ENCODE measurements at regions of chr7 and their contacts with region 1.

Region 1: DNA sequence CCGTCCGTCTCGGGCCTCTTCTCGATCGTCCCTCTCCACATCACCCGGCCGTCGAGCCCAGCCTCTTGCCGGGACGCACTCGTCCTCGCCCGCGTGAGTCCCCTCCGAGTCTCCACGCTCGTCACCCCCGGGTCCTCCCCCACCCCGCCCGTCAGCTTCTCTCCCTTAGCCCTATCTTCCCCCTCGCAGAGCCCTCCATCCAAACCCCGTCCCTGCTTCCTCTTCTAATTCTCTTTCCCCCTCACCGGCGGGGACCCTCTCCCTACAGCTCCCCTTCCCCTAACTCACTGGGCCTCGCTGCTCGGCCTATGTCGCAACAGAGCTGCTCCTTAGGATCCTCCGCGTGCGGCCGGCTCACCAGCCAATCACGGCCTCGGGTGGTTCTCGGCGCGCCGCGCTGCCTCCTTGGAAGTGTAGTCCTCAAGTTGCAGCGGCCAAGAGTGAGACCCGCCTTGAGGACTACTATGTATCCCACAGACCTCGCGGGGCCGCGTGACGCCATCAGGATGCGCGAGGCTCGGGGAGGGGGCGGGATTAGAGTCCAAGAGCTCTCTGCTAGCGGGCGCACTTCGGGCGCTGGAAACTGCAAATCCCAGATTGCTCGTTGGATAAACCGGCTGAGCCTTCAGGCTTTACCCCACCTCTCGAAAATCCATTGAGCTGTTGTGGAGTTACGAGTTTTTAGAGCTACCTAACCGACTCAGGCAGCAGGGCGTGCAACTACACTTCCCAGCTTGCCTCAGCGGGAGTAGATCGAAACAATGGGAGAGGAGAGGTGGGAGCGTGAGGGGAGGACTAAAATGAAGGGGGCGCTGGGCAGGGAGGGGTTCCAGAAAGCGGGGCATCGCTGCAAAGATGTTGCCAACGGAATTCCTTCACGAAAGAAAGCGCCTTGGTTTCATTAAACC is at the start of gene ABCF2:
- DNase-seq: peak; percentile 97
- H3K4me3 Mint-ChIP-seq: peak within 1 kb of the TSS; percentile 98
- H3K27ac Mint-ChIP-seq: peak within 1 kb of the TSS; percentile 94
- H3K4me1 Mint-ChIP-seq: peaks cover 43% of the 10 kb centered on the region
- H3K27me3 Mint-ChIP-seq: peaks cover 2% of the 10 kb centered on the region
- total RNA-seq, gene ABCF2: 81.7 and 85.4 TPM in 2 replicates

Region 2: GRCh38 chr7:151028131-151028947 is 198.8 kb before region 1 on chr7 and contains the start of gene ABCB8:
- intact Hi-C with region 1: loop called (anchors 1 kb)
- DNase-seq: peak; percentile 98
- H3K4me3 Mint-ChIP-seq: peak within 1 kb of the TSS; percentile 94
- H3K27ac Mint-ChIP-seq: peak within 1 kb of the TSS; percentile 95
- H3K4me1 Mint-ChIP-seq: peaks cover 21% of the 10 kb centered on the region
- H3K27me3 Mint-ChIP-seq: peaks cover 2% of the 10 kb centered on the region
- total RNA-seq, gene ABCB8: 56.9 and 57.9 TPM in 2 replicates

Region 3: GRCh38 chr7:151087245-151088018 is 139.7 kb before region 1 on chr7:
- intact Hi-C with region 1: loop called (anchors 1 kb)
- DNase-seq: no peak
- H3K4me3 Mint-ChIP-seq: peak overlapping the region; percentile 88
- H3K27ac Mint-ChIP-seq: peak overlapping the region; percentile 84
- H3K4me1 Mint-ChIP-seq: peaks cover 41% of the 10 kb centered on the region
- H3K27me3 Mint-ChIP-seq: peaks cover 20% of the 10 kb centered on the region

Region 4: GRCh38 chr7:151244196-151244840 is 17.2 kb after region 1 on chr7:
- intact Hi-C with region 1: loop called (anchors 1 kb)
- DNase-seq: peak; percentile 49
- H3K4me3 Mint-ChIP-seq: peak overlapping the region; percentile 49
- H3K27ac Mint-ChIP-seq: no peak overlapping the region
- H3K4me1 Mint-ChIP-seq: peaks cover 26% of the 10 kb centered on the region
- H3K27me3 Mint-ChIP-seq: peaks cover 32% of the 10 kb centered on the region

Region 5: DNA sequence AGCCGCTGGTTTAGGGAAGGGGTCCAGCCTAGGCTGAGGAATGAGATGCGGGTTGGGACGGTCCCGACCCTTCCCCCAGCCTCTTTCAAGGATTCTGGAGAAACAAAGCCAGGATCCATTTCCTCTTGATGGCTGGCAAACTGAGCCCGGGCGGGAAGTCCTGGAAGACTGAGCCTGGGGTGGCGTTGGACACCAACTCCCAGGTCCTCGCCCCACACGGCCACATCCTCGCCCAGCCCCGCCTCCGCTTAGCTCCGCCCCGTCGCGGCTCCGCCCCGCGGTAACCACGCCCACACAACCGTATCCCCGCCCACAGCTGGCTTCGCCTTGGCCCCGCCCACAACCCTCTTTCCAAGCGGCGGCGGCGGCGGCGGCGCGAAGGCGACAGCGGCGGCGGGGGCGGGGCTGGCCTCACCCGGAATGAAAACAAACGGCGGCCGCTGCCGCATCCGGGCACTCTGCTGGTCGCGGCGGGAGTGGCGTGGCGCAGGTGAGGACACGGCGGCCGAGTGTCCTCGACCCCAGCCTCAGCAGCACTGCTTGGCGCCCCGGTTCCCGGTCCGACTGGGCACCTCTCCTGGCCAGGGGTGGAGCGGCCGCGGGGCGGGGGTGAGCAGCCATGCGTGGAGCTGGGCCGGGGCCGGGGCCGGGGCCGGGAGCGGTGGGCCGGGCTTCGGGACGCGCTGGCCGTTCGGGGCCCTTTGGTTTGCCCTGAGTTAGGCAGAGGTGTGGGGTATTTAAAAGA is 114.4 kb after region 1 on chr7 and contains the start of gene NUB1:
- intact Hi-C with region 1: loop called (anchors 1 kb)
- DNase-seq: peak; percentile 92
- H3K4me3 Mint-ChIP-seq: peak within 1 kb of the TSS; percentile 83
- H3K27ac Mint-ChIP-seq: peak within 1 kb of the TSS; percentile 76
- H3K4me1 Mint-ChIP-seq: peaks cover 23% of the 10 kb centered on the region
- H3K27me3 Mint-ChIP-seq: no peaks in the 10 kb centered on the region
- total RNA-seq, gene NUB1: 40.3 and 41.2 TPM in 2 replicates